GM23248 (cell line): ENCODE measurements at regions of chr15 and their contacts with region 1.

Region 1: GRCh38 chr15:81265944-81266775 is 57.8 kb downstream of the STARD5 start:
- DNase-seq: peak; percentile 90
- H3K4me3 ChIP-seq: peak overlapping the region; percentile 59
- H3K27ac ChIP-seq: no peak overlapping the region
- H3K4me1 ChIP-seq: peaks cover 21% of the 10 kb centered on the region
- H3K27me3 ChIP-seq: no peaks in the 10 kb centered on the region

Region 2: DNA sequence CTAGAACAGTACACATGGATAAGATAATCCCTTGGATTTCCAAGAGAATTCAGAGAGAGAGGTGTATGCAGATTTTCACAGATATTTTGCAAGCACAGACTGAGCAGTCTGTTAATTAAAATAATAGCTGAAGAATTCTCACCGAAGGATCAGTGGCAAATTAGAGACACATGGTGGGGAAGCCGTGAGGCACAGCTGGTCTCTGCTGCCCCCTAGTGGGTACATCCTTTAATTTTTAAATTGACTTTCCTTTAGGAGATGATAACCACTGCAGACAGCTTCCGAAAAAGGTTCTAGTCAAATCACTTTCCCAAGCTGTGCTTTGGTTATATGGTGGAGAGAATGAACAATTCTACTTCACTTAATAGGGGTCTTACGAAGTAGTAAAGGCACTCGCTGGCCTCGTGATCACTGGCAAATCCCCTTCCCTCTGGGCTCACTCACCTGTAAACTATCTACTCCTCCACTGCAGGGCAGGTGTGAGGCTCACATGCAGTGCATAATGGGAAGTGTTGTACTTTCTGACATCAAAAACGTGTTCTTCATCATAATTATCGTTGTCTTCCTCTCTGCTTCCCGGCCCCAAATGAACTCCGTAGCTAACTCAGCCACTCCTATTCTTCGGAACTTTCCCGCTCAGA is 296.0 kb before region 1 on chr15:
- in situ Hi-C with region 1: loop called (anchors 10 kb)
- DNase-seq: peak; percentile 72
- H3K4me3 ChIP-seq: no peak overlapping the region
- H3K27ac ChIP-seq: no peak overlapping the region
- H3K4me1 ChIP-seq: peaks cover 13% of the 10 kb centered on the region
- H3K27me3 ChIP-seq: no peaks in the 10 kb centered on the region

Region 3: DNA sequence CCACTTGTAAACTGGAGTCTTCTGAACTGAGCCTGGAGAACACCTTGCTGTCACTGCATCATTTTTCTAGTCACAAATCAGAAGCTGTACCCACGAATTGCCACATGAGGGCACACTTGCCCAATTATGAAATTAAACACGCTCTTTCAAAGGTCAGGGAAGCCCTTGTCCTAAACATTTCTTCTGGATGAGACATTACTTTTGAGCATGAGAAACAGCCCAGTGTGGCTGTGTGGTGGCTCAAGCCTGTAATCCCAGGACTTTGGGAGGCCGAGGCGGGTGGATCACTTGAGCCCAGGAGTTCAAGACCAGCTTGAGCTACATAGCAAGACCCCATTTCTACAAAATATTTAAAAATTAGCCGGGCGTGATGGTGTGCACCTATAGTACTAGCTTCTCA is 159.6 kb before region 1 on chr15:
- in situ Hi-C with region 1: loop called (anchors 5 kb)
- DNase-seq: peak; percentile 90
- H3K4me3 ChIP-seq: no peak overlapping the region
- H3K27ac ChIP-seq: no peak overlapping the region
- H3K4me1 ChIP-seq: peaks cover under 1% of the 10 kb centered on the region
- H3K27me3 ChIP-seq: no peaks in the 10 kb centered on the region